Posterior cingulate gyrus (tissue), 11 donors: ENCODE measurements at regions of chr6 and their contacts with region 1.

Region 1: DNA sequence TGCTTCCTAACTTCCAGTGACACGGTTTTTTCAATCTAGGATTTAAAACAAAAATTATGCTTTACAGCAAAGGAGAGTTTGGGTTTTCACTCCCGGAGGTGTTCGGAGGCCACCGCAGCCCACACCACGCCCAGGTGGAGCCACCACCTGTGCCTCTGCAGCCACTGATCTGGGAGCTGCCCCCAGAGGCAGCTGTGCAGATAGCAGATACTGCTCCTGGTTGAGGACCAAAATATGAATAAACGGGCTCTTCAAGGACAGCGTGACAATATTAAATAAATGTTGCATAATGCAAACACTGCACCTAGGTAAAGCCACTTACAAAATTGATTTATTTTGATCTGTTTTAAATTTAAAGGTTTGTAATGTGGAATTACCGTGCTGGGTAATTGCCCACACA is 30.2 kb downstream of the DLL1 start:
- DNase-seq: peak in 4 of 10 donors; percentile 6 to 39 (median 30)

Region 2: GRCh38 chr6:169487579-169488436 is 772.9 kb before region 1 on chr6:
- intact Hi-C with region 1: no loop called
- DNase-seq: peak in 2 of 10 donors; percentile 27 to 65

Region 3: DNA sequence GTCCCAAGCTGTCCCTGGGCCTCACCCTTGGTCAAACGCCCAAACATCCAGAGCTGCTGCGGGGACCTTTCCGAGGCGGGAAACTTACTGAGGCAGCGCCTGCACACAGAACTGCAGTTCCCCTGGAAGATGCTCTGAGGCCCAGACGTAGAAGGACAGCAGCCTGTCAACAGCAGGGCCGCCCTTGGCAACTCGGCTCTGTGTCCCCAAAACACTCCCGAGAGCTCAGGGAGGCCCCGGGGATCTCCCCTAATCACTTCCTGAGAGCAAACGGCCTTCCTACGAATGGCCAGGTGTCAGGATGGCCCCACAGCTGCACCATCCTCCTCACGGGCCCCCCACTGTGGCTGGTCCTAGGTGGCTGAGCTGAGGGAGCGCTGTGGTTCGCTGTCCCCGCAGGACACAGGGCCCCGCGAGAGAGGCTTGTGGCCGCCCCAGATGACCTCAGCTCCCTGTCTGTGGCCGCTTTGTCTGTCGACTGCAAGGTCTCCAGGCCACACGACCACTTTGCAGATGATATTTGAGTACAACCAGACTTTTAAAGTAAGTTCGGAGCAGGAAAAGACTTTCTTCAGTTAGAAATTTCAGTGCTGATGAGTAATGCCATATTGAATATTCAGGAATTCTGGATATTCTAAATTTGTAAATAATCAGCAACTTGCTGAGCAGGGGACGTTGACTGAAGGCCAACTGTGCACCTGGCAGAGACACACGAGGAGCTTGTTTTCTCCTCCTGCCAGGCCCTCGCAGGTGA is 15.8 kb before region 1 on chr6:
- intact Hi-C with region 1: loop called (anchors 1 kb)
- DNase-seq: peak in 4 of 10 donors; percentile 21 to 84 (median 70)

Region 4: DNA sequence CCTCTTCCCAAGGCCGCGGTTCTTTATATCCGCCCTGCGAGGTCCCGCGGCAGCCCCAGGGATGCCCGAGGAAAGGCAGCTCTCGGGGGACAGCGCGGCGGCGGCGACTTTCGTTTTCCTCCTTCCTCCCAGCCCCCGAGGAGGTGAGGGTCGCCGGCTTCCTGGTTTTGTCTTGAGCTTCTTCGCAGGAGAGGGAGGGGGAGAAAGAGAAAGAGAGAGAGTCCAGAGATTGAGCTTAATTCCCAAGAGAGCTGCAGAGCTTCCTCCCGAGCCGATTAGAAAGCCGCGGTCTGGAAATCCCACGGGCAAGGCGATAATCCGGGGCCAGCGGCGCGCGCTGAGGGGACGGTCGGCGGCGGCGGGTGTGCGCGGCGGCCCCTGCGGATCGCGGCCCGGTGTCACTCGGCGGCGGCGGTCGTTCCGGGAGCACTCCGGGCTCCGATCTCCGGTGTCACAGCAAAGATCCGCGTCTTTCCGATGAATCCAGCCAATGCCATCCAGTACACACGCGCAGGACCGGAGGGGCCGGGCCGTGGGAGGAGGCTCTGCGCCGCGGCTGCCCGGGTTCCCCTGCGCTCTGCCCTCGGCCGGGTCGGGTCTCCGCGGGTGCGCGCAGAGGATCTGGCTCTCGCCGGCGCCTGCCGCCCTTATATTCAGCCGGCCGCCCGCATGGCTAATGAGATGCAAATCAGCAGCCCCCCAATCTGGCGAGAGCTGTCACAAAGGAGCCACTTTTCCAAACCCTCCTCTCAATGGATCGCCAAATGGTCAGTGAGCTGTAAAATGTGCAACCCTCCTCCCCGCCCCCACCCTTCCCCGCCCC is 29.8 kb after region 1 on chr6 and contains the start of gene DLL1:
- intact Hi-C with region 1: loop called (anchors 1 kb)
- DNase-seq: peak; percentile 80 to 98 (median 88)